MCF 10A (cell line): ENCODE measurements at regions of chr15 and their contacts with region 1.

Region 1: DNA sequence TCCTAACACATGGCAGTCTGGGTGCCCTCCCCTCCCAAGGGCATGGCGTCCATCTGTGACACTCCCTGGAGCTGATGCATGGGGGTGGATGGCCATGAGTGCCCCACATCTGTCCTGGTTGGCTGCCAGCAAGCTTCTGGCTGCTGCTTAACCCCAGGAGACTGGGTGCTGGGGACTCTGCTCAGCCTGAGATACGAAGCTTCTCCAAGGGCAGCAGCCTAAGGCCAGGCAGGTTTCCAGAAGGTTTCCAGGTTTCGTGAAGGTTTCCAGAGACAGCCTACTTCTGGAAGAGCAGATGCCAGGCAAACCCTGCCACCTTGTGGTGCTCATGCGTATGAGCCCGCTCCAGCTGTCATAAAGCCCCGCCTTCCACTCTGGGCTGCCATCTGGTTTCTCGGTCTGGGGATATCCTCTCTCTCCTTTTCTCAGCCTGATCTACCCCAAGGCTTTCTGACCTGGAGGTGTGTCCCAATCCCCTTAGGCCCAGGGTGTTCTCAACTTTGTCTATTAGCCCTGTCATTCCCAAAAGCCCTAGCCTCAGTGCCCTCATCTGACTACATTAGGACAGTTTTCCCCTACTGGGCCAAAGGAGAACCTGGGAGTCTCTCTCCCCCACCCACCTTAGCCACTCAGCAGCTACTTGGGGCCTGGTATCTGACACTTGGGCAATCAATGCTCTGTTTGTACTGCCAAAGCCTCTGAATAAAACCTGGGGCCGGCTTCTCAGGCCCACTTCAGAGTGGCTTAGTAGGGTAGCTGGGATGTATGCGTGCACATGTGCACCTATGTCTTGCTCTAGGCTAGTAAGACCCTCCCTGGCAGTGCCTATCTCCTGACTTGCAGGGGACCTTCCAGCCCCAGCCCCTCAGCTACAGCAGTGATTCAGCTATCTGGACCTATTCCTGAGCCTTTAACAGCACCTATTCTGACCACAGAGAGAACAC is 12.0 kb downstream of the MRPL46 start:
- DNase-seq: peak; percentile 73
- H3K4me3 Mint-ChIP-seq: no peak overlapping the region
- H3K27ac Mint-ChIP-seq: no peak overlapping the region
- H3K4me1 Mint-ChIP-seq: peaks cover 1% of the 10 kb centered on the region
- H3K27me3 Mint-ChIP-seq: no peaks in the 10 kb centered on the region
- CTCF ChIP-seq: peak; percentile 58

Region 2: DNA sequence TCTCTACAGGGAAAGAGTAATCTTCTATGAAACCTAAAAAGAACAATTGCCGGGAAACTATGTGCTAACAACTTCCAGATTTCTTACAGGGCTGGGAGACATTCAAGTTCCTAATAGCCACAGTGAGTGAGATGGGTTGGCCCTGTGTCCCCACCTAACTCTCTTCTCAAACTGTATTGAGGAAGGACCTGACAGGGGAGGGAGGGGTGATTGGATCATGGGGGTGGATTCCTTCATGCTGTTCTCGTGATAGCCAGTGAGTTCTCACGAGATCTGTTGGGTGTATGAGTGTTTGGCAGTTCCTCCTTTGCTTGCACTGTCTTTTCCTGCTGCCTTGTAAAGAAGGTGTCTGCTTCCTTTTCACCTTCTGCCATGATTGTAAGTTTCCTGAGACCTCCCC is 1416.7 kb before region 1 on chr15:
- CTCF ChIA-PET with region 1: interaction called, 3 read pairs
- POLR2A ChIA-PET with region 1: no interaction called
- intact Hi-C with region 1: loop called (anchors 5 kb)
- DNase-seq: no peak
- H3K4me3 Mint-ChIP-seq: no peak overlapping the region
- H3K27ac Mint-ChIP-seq: no peak overlapping the region
- H3K4me1 Mint-ChIP-seq: no peaks in the 10 kb centered on the region
- H3K27me3 Mint-ChIP-seq: no peaks in the 10 kb centered on the region
- CTCF ChIP-seq: no peak

Region 3: DNA sequence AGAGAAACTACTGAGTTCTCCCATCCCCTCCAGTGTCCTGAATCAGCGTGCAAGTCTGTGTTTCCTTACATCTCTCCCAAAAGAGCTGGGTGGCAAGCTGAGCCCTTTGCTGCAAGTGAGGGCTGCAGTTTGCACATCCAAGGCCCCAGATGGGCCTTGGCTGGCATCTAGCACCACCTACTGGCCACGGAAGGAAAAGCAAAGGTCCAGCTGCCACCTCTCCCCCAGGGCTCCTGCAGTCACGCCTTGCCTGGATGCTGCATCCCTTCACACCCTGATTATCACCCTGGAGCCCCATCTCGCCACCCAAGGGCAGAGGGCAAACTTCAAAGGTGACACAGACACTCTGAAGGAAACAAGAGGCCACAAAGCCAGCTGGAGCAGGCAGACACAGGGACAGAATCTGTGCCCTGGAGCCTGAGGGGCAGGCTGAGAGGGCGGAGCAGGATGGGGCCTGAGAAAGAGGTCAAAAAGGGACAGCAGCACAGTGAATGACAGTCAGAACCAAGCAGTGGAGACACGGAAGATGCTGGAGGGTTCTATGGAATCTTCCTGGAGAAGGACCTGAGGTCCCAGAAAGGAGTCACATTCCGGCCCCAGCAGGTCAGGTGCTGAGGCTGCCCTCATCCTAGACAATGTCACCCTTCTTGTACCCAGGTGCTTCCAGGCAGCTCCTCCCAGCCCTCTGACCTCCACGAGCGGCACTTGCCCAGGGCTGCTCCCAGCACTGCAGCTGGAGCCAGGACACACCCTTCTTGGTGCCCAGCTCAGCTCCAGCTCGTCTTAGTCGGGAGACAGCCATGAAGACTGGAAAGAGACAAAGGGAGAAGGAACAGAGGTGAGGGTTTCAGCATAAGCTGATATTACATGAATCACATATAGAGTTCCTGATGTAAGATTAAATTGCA is 180.3 kb before region 1 on chr15:
- CTCF ChIA-PET with region 1: interaction called, 5 read pairs
- POLR2A ChIA-PET with region 1: no interaction called
- intact Hi-C with region 1: loop called (anchors 1 kb)
- DNase-seq: peak; percentile 23
- H3K4me3 Mint-ChIP-seq: no peak overlapping the region
- H3K27ac Mint-ChIP-seq: no peak overlapping the region
- H3K4me1 Mint-ChIP-seq: no peaks in the 10 kb centered on the region
- H3K27me3 Mint-ChIP-seq: peaks cover 13% of the 10 kb centered on the region
- CTCF ChIP-seq: peak; percentile 85